Right ventricle myocardium inferior (tissue), 1 donor: ENCODE measurements at regions of chr15 and their contacts with region 1.

Region 1: DNA sequence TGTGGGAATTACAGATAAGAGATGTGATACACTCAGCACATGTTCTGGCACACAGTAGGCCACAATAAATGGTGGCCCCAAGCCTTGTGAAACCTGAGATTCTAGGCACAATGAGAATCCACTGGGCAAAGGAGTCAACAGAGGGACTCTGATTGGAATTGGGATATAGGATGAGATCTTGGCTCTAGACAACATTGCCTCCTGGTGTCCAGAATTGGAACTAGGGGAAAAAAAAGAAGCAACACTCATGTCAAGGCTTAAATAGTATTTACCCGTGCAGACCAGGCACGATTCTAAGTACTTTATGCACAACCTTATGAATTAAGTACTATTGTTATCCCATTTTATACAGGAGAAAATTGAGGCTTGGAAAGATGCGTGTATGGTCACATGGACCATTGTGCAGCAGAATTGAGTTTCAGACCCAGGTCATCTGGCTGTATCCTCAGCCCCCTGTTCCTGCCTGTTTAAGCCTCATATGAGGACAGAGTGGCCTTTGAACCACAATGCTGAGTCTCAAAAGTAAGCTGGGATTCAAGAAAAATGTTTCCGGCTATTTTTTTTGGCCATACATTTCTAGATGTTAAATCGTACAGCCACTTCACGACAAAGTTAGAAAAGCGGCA is 124.8 kb downstream of the SV2B start:
- DNase-seq: no peak
- ATAC-seq: no peak

Region 2: DNA sequence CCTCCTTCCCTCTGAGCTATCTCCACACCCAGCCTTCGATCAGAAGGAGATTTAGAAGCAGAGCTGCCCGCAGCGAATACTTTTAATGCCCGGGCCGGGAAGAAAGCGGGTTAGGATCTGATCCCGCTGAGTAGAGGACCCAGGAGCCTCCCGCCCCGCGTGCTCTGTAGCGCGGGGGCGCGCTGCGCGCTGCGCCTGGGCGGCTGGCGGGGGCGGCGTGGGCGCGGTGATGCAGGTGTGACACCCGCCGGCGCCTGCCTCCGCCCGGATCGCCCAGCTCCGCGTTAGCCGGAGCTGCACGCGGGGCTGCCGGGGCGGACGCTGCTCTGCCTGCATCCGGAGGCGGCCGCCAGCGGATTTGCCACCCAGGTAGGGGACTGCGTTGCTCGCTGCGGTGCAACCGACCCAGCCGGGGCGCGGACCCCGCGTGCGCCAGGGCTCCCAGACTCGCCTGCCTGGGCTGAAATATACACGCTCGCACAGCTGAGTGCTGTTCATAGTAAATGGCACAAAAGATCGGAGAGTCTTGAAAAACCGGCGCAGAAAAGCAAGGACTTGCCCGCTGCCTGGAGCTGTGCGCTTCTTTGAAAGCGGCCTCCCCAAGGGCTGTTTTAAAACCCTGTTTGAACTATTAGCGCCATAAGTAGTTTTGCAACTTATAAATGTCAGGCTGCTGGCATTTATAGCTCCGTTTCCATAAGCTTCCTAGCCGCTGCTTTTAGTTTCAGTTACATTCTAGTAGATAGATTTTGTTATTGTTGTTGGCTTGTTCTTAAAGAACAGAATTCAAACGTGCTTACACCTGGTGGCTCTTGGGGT is 124.7 kb before region 1 on chr15 and contains the start of gene SV2B:
- intact Hi-C with region 1: loop called (anchors 5 kb)
- DNase-seq: no peak
- ATAC-seq: peak; percentile 38
- total RNA-seq, gene SV2B: 3.5 TPM